ENCODE measurements at regions of chr10 and their contacts with region 1.

Region 1: DNA sequence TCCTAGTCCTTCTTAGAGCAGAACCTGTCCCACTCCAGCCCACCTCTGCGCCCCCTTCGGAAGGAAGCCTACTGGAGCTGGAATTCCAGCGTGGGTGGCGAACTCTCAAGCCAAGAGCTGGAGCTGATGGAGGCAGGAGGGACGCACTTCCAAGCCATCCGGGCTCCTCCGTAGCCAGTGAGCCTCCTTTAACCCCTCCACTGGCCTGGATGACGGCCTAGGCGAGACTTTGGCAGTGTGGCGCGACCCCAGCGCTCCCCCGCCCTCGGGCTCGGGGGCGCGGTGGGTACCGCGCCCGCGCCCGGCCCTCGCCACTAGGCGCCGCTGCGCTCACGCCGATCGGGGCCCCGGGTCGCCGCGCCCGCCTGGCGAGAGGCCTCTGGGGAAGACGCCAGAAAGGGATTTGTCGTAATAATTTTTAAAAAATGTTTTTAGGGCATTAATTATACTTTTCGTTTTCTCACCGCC is 5.1 kb upstream of the EMX2 start:
- DNase-seq: peak; percentile 43
- ATAC-seq: peak; percentile 10
- H3K4me3 Mint-ChIP-seq: peak overlapping the region; percentile 50
- H3K27ac Mint-ChIP-seq: no peak overlapping the region
- H3K4me1 Mint-ChIP-seq: peaks cover 26% of the 10 kb centered on the region
- H3K27me3 Mint-ChIP-seq: peaks cover 100% of the 10 kb centered on the region
- CTCF ChIP-seq: peak; percentile 60

Region 2: DNA sequence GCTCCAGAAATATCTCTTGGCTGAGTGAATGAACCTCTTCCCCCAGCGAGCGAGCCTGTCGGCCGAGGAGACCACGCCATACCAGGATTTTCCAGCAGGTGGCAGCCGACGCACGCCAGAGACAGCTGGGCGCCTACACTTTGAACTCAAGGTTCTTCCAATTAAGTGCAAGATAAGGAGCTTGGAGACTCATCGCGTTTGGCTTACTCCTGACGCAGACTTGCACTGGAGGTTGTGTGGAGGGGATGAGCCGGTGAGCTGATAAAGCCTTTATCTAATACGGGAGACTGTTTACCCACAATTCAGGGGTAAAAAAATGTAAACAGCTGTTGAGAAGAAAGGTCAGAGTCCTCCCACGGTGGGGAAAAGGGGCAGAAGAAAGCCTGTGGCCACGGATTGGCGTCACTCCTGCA is 40.8 kb before region 1 on chr10:
- CTCF ChIA-PET with region 1: interaction called, 27 read pairs
- POLR2A ChIA-PET with region 1: no interaction called
- DNase-seq: peak; percentile 82
- ATAC-seq: peak; percentile 88
- H3K4me3 Mint-ChIP-seq: no peak overlapping the region
- H3K27ac Mint-ChIP-seq: no peak overlapping the region
- H3K4me1 Mint-ChIP-seq: peaks cover 2% of the 10 kb centered on the region; the same call in 1 of the 2 replicates
- H3K27me3 Mint-ChIP-seq: peaks cover 35% of the 10 kb centered on the region
- CTCF ChIP-seq: peak; percentile 88

Region 3: DNA sequence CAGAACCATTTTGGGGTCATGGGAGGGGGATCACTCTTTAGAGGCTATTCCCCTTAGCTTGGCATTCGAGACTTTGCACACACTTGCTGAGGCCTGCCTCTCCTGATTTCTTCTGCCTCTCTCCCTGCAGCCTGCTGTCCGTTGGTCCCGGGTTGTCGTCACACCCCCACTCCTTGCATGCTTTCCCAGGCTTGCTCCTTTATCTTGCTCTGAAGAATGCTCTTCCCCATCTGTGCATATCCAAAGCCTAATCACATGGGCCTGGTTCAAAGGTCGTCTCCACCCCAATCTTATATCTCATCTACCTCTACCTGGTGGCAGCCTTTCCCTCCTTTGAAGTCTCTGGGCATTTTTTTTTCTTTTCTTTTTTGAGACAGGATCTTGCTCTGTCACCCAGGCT is 19.2 kb before region 1 on chr10:
- CTCF ChIA-PET with region 1: no interaction called
- POLR2A ChIA-PET with region 1: no interaction called
- DNase-seq: no peak
- ATAC-seq: peak; percentile 34; the same call in 1 of the 2 replicates
- H3K4me3 Mint-ChIP-seq: no peak overlapping the region
- H3K27ac Mint-ChIP-seq: no peak overlapping the region
- H3K4me1 Mint-ChIP-seq: peaks cover 4% of the 10 kb centered on the region
- H3K27me3 Mint-ChIP-seq: peaks cover 5% of the 10 kb centered on the region
- CTCF ChIP-seq: no peak

Region 4: GRCh38 chr10:117552156-117552631 is 14.7 kb after region 1 on chr10:
- CTCF ChIA-PET with region 1: interaction called, 28 read pairs
- POLR2A ChIA-PET with region 1: interaction called, 3 read pairs
- DNase-seq: peak; percentile 59
- ATAC-seq: peak; percentile 57
- H3K4me3 Mint-ChIP-seq: peak overlapping the region; percentile 51
- H3K27ac Mint-ChIP-seq: no peak overlapping the region
- H3K4me1 Mint-ChIP-seq: peaks cover 45% of the 10 kb centered on the region
- H3K27me3 Mint-ChIP-seq: peaks cover 97% of the 10 kb centered on the region
- CTCF ChIP-seq: no peak

Region 5: GRCh38 chr10:117684672-117685271 is 147.3 kb after region 1 on chr10:
- CTCF ChIA-PET with region 1: interaction called, 20 read pairs
- POLR2A ChIA-PET with region 1: no interaction called
- DNase-seq: peak; percentile 29
- ATAC-seq: peak; percentile 66
- H3K4me3 Mint-ChIP-seq: no peak overlapping the region
- H3K27ac Mint-ChIP-seq: no peak overlapping the region
- H3K4me1 Mint-ChIP-seq: 0 out of 2 replicates have a peak, but pooled peaks cover 1% of the 10 kb centered on the region
- H3K27me3 Mint-ChIP-seq: no peaks in the 10 kb centered on the region; the same call in 1 of the 2 replicates
- CTCF ChIP-seq: no peak